Mammary epithelial cell (primary cell): ENCODE measurements at regions of chr1 and their contacts with region 1.

Region 1: GRCh38 chr1:173195596-173196088 is 11.5 kb downstream of the TNFSF4 start:
- DNase-seq: no peak
- H3K4me3 ChIP-seq: no peak overlapping the region
- H3K27ac ChIP-seq: no peak overlapping the region
- H3K4me1 ChIP-seq: peaks cover 9% of the 10 kb centered on the region
- H3K27me3 ChIP-seq: no peaks in the 10 kb centered on the region
- CTCF ChIP-seq: no peak

Region 2: DNA sequence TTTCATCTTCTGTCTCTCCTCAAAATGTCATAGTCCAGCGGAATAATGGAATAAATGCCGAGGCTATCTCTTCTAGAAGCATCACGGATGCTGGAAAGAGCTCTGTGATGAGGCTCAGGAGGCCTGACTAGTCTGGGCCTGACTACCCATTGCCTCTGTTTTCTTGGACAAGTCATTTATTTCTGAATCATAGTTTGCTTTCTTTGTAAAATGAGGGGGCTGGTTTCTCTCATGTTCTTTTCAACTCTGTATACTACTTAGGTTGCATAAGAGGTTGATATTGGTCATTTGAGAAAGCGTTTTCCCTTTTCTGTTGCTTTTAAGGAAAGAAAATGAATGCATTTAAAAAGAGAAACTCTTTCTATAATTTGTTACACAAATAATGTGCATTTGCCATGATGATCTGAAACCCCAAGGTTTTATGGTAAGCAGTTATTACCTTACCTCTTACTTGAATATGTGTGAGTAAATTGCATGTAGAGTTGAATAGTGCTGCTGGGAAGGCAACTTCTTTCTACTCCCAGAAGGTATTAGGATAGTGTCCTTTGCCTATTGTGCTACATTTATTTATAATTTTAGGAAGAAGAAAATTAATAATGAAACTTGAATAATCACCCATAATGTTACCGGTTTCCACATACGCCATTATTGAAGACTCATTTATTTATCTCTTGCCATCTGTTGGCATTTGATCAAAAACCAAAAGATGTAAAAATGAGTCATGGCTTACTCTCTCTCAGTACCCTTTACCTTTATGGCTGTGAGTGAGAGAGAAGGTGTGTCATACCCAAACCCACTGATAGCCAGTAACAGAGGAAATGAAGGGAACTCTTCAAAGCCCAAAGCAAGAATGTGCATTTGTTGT is 357.6 kb before region 1 on chr1:
- CTCF ChIA-PET with region 1: no interaction called
- dilution Hi-C with region 1: no loop called
- in situ Hi-C with region 1: loop called (anchors 5 kb)
- intact Hi-C with region 1: no loop called
- DNase-seq: peak; percentile 95
- H3K4me3 ChIP-seq: peak overlapping the region in 2 of 3 experiments; percentile 16 to 31
- H3K27ac ChIP-seq: peak overlapping the region; percentile 89
- H3K4me1 ChIP-seq: peaks cover 20% of the 10 kb centered on the region
- H3K27me3 ChIP-seq: no peaks in the 10 kb centered on the region
- CTCF ChIP-seq: no peak

Region 3: DNA sequence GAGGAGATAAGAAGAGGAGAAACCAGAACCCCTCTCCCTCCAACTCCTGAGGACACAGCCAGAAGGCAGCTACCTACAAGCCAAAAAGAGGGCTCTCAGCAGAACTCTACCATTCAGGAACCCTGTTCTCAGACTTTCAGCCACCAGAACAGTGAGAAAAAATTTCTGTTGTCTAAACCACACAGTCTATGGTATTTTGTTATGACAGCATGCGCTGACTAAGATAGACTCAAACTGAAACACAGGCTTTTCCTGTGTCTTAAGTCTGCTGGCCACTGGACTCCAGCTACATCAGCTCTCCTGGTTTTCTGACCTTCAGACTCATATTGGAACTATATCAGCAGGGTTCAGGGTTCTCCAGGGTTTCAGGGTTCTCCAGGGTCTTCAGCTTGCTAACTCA is 137.9 kb after region 1 on chr1:
- CTCF ChIA-PET with region 1: no interaction called
- dilution Hi-C with region 1: no loop called
- in situ Hi-C with region 1: no loop called
- intact Hi-C with region 1: no loop called
- DNase-seq: no peak
- H3K4me3 ChIP-seq: no peak overlapping the region
- H3K27ac ChIP-seq: no peak overlapping the region
- H3K4me1 ChIP-seq: peaks cover 8% of the 10 kb centered on the region
- H3K27me3 ChIP-seq: no peaks in the 10 kb centered on the region
- CTCF ChIP-seq: no peak